Activated B cell treated with CpG ODN at 0.5 μM for 24 hours (primary cell): ENCODE measurements at regions of chr19 and their contacts with region 1.

Region 1: DNA sequence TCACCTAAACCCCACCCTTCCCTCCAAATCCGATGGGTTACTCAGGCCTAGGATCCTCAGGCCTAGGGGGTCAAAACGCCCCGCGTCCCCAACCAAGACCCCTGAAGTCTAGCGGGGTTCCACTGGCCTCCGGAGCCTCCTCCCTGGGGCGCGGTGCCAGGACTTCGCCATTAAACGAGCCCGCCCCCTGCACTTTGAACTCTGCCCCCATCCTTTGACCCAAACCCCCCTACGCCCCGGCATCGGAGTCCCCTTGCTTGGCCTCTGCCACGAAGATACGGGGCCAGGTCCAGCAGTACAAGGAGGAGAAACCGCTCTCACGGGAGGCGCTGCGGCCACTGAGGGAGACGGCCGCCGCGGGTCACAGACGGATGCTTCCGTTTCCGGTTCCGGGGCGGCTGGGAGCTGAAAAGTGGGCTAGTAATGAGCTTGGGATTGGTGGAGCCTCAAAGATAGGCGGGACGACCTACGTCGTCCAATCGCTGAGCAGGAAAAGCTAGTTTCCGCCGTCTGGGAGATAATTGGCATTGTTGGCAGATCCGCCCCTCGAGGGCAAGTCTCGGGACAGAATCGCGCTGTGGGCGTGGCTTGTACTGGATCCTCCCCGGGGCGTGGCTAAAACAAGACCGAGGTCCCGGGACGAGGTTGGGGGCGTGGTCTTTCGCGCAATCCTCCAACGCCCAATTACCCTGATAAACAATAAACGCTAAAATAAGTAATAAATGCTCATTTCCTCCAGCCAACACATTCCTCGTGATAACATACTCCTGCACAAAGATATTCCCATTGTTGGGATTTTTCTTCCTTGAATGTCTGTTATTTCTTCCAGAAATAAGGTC is 5.7 kb upstream of the ZNF77 start:
- DNase-seq: peak; percentile 99
- ATAC-seq: peak; percentile 93
- H3K4me3 Mint-ChIP-seq: peak overlapping the region; percentile 98
- H3K27ac Mint-ChIP-seq: peak overlapping the region; percentile 98
- H3K4me1 Mint-ChIP-seq: peaks cover 20% of the 10 kb centered on the region
- H3K27me3 Mint-ChIP-seq: no peaks in the 10 kb centered on the region
- CTCF ChIP-seq: no peak

Region 2: DNA sequence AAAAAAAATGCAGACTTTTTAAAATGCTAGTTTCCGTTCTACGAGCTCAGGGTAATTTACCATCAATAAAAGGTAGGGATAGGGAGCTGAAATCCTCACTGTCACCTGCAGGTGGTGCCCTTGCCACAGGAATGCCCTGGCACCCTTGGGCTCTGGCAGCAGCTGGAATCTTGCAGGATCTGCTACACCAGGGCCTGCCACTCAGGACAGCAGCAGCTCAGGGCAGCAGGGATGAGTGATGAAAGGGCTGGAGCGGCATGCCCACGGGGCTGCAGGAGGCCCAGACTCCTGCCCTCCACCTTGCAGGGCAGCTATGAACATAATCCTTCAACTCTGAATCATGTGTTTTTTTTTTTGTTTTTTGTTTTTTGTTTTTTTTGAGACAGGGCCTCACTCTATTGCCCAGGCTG is 302.0 kb before region 1 on chr19:
- CTCF ChIA-PET with region 1: interaction called, 6 read pairs
- POLR2A ChIA-PET with region 1: interaction called, 7 read pairs
- intact Hi-C with region 1: loop called (anchors 2 kb)
- DNase-seq: peak; percentile 75
- ATAC-seq: peak; percentile 87
- H3K4me3 Mint-ChIP-seq: no peak overlapping the region
- H3K27ac Mint-ChIP-seq: peak overlapping the region; percentile 35
- H3K4me1 Mint-ChIP-seq: peaks cover 43% of the 10 kb centered on the region
- H3K27me3 Mint-ChIP-seq: no peaks in the 10 kb centered on the region
- CTCF ChIP-seq: no peak

Region 3: GRCh38 chr19:2887391-2887914 is 63.1 kb before region 1 on chr19:
- CTCF ChIA-PET with region 1: interaction called, 11 read pairs
- POLR2A ChIA-PET with region 1: interaction called, 15 read pairs
- intact Hi-C with region 1: loop called (anchors 2 kb)
- DNase-seq: peak; percentile 20
- ATAC-seq: peak; percentile 65
- H3K4me3 Mint-ChIP-seq: peak overlapping the region; percentile 24
- H3K27ac Mint-ChIP-seq: peak overlapping the region; percentile 81
- H3K4me1 Mint-ChIP-seq: peaks cover 20% of the 10 kb centered on the region
- H3K27me3 Mint-ChIP-seq: no peaks in the 10 kb centered on the region
- CTCF ChIP-seq: no peak

Region 4: DNA sequence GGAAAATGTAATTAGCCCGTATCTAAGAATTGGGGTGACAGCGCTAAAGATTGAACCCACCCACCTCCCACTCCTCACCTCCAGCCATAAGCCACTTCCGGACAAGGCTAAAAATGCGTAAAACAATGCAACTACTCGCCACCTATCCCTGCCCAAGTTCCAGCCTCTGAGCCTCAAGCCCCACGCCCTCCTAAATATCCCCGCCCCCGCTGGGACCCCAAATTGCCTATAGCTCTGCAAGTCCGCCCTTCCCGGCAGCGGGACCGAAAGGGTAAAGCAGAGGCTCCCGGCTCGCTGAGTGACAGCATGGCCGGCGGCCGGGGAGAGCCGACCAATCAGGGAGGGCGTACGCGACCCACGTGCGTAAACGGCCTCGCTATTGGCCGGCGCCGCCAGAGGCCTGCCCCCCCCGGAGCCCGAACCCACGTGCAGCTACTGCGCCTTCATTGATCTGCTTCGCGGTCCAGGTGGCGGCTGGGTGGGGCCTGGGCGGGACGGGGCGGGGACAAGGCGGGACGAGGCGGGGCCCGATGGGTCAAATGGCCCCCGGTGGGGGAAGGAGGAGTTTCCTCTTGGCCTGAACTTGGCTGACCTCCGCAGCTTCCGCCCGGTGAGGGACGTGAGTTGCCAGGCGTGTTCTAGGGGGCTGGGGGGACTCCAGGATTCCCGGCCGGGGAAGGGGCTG is 26.6 kb after region 1 on chr19 and contains the start of gene TLE6:
- CTCF ChIA-PET with region 1: interaction called, 3 read pairs
- POLR2A ChIA-PET with region 1: interaction called, 8 read pairs
- intact Hi-C with region 1: loop called (anchors 1 kb)
- DNase-seq: peak; percentile 83
- ATAC-seq: peak; percentile 98
- H3K4me3 Mint-ChIP-seq: peak within 1 kb of the TSS; percentile 91
- H3K27ac Mint-ChIP-seq: peak within 1 kb of the TSS; percentile 81
- H3K4me1 Mint-ChIP-seq: peaks cover 22% of the 10 kb centered on the region
- H3K27me3 Mint-ChIP-seq: peaks cover 8% of the 10 kb centered on the region
- CTCF ChIP-seq: no peak
- total RNA-seq, gene TLE6: 0.42 and 0.93 TPM in 2 replicates

Region 5: GRCh38 chr19:3100865-3101730 is 150.6 kb after region 1 on chr19:
- CTCF ChIA-PET with region 1: interaction called, 41 read pairs
- POLR2A ChIA-PET with region 1: no interaction called
- intact Hi-C with region 1: loop called (anchors 1 kb)
- DNase-seq: no peak
- ATAC-seq: no peak
- H3K4me3 Mint-ChIP-seq: no peak overlapping the region
- H3K27ac Mint-ChIP-seq: no peak overlapping the region
- H3K4me1 Mint-ChIP-seq: peaks cover 29% of the 10 kb centered on the region
- H3K27me3 Mint-ChIP-seq: no peaks in the 10 kb centered on the region
- CTCF ChIP-seq: no peak

Region 6: DNA sequence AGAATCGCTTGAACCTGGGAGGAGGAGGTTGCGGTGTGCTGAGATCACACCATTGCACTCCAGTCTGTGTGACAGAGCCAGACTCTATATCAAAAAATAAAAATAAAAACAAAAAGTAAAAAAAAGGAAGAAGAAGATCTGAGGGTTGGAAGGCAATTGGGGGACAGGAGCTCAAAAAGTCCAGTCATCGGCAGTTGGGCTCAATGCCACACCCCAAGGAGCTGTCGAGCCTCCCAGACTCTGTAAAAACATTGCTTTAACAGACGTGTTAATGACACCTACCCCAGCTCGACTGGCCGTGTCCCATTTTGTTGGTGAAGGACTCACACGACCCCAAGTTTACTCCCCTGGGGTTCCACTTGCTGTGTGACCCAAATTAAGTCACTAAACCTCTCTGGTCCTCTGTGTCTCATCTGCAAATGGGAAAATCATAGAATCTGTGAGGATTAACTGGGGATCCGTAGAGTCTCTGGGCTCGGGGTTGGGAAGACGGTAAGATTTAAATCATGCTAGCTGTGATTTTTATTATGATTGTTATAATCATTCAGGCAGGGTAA is 192.4 kb after region 1 on chr19:
- CTCF ChIA-PET with region 1: no interaction called
- POLR2A ChIA-PET with region 1: no interaction called
- intact Hi-C with region 1: no loop called
- DNase-seq: no peak
- ATAC-seq: no peak
- H3K4me3 Mint-ChIP-seq: no peak overlapping the region
- H3K27ac Mint-ChIP-seq: peak overlapping the region; percentile 24
- H3K4me1 Mint-ChIP-seq: peaks cover 32% of the 10 kb centered on the region
- H3K27me3 Mint-ChIP-seq: peaks cover 2% of the 10 kb centered on the region
- CTCF ChIP-seq: no peak

Region 7: GRCh38 chr19:3210347-3211017 is 260.0 kb after region 1 on chr19:
- CTCF ChIA-PET with region 1: interaction called, 3 read pairs
- POLR2A ChIA-PET with region 1: no interaction called
- intact Hi-C with region 1: loop called (anchors 1 kb)
- DNase-seq: peak; percentile 62
- ATAC-seq: peak; percentile 94
- H3K4me3 Mint-ChIP-seq: no peak overlapping the region
- H3K27ac Mint-ChIP-seq: no peak overlapping the region
- H3K4me1 Mint-ChIP-seq: peaks cover 14% of the 10 kb centered on the region
- H3K27me3 Mint-ChIP-seq: no peaks in the 10 kb centered on the region
- CTCF ChIP-seq: no peak